MCF 10A (cell line): ENCODE measurements at regions of chr5 and their contacts with region 1.

Region 1: GRCh38 chr5:54415896-54416601 is 39.5 kb upstream of the HSPB3 start:
- DNase-seq: peak; percentile 26
- H3K4me3 Mint-ChIP-seq: no peak overlapping the region
- H3K27ac Mint-ChIP-seq: no peak overlapping the region
- H3K4me1 Mint-ChIP-seq: peaks cover 14% of the 10 kb centered on the region
- H3K27me3 Mint-ChIP-seq: no peaks in the 10 kb centered on the region
- CTCF ChIP-seq: no peak

Region 2: GRCh38 chr5:54379590-54379989 is 36.5 kb before region 1 on chr5:
- CTCF ChIA-PET with region 1: interaction called, 5 read pairs
- POLR2A ChIA-PET with region 1: no interaction called
- intact Hi-C with region 1: loop called (anchors 2 kb)
- DNase-seq: no peak
- H3K4me3 Mint-ChIP-seq: no peak overlapping the region
- H3K27ac Mint-ChIP-seq: no peak overlapping the region
- H3K4me1 Mint-ChIP-seq: peaks cover 7% of the 10 kb centered on the region
- H3K27me3 Mint-ChIP-seq: no peaks in the 10 kb centered on the region
- CTCF ChIP-seq: no peak

Region 3: GRCh38 chr5:54401515-54401914 is 14.5 kb before region 1 on chr5:
- CTCF ChIA-PET with region 1: interaction called, 11 read pairs
- POLR2A ChIA-PET with region 1: interaction called, 11 read pairs
- intact Hi-C with region 1: no loop called
- DNase-seq: no peak
- H3K4me3 Mint-ChIP-seq: no peak overlapping the region
- H3K27ac Mint-ChIP-seq: no peak overlapping the region
- H3K4me1 Mint-ChIP-seq: peaks cover 21% of the 10 kb centered on the region
- H3K27me3 Mint-ChIP-seq: no peaks in the 10 kb centered on the region
- CTCF ChIP-seq: no peak

Region 4: DNA sequence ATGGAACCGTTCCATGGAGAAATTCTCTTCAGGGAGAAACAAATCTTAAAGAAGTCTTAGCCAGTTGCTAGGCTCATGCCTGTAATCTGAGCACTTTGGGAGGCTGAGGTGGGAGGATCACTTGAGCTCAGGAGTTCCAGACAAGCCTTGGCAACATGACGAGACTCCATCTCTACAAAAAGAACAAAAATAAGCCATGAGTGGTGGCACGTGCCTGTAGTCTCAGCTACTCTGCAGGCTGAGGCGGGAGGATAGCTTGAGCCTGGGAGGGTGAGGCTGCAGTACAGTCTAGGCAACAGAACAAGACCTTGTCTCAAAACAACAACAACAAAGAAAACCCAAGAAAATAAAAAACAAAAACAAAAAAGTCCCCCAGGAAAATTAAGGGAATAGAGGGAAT is 47.7 kb after region 1 on chr5:
- CTCF ChIA-PET with region 1: no interaction called
- POLR2A ChIA-PET with region 1: no interaction called
- intact Hi-C with region 1: no loop called
- DNase-seq: no peak
- H3K4me3 Mint-ChIP-seq: no peak overlapping the region
- H3K27ac Mint-ChIP-seq: no peak overlapping the region
- H3K4me1 Mint-ChIP-seq: no peaks in the 10 kb centered on the region
- H3K27me3 Mint-ChIP-seq: no peaks in the 10 kb centered on the region
- CTCF ChIP-seq: no peak